Naive thymus-derived CD4-positive, alpha-beta T cell (primary cell): ENCODE measurements at regions of chr17 and their contacts with region 1.

Region 1: GRCh38 chr17:48830840-48831548 is at the start of gene CALCOCO2:
- DNase-seq: peak; percentile 69 to 88 (median 77)
- ATAC-seq: peak; percentile 96
- H3K4me3 ChIP-seq: peak within 1 kb of the TSS; percentile 97
- H3K4me3 Mint-ChIP-seq: peak within 1 kb of the TSS; percentile 93 to 99 (median 97)
- H3K27ac ChIP-seq: peak within 1 kb of the TSS; percentile 92
- H3K27ac Mint-ChIP-seq: peak within 1 kb of the TSS; percentile 83 to 99 (median 99)
- H3K4me1 ChIP-seq: peaks cover 15 to 29% of the 10 kb centered on the region in 2 donors
- H3K4me1 Mint-ChIP-seq: peaks cover 32 to 63% (median 53%) of the 10 kb centered on the region in 7 donors
- H3K27me3 ChIP-seq: no peaks in the 10 kb centered on the region
- H3K27me3 Mint-ChIP-seq: peaks cover 0 to 2% (median 0%) of the 10 kb centered on the region in 5 donors
- total RNA-seq, gene CALCOCO2: 129 to 208 (median 139) TPM

Region 2: GRCh38 chr17:48441231-48441711 is 389.7 kb before region 1 on chr17:
- CTCF ChIA-PET with region 1: no interaction called
- POLR2A ChIA-PET with region 1: no interaction called
- intact Hi-C with region 1: loop called in 1 of 2 experiments (anchors 10 kb)
- DNase-seq: peak in 7 of 9 donors; percentile 74 to 88 (median 86)
- ATAC-seq: peak; percentile 80
- H3K4me3 ChIP-seq: peak overlapping the region; percentile 28
- H3K4me3 Mint-ChIP-seq: peak overlapping the region; percentile 61 to 86 (median 76)
- H3K27ac ChIP-seq: peak overlapping the region; percentile 63
- H3K27ac Mint-ChIP-seq: peak overlapping the region; percentile 69 to 96 (median 95)
- H3K4me1 ChIP-seq: peaks cover 93 to 95% of the 10 kb centered on the region in 2 donors
- H3K4me1 Mint-ChIP-seq: peaks cover 80 to 97% (median 94%) of the 10 kb centered on the region in 7 donors
- H3K27me3 ChIP-seq: no peaks in the 10 kb centered on the region
- H3K27me3 Mint-ChIP-seq: no peaks in the 10 kb centered on the region

Region 3: GRCh38 chr17:48841395-48841831 is 10.4 kb after region 1 on chr17:
- CTCF ChIA-PET with region 1: no interaction called
- POLR2A ChIA-PET with region 1: interaction called, 10 read pairs
- intact Hi-C with region 1: loop called (anchors 1 kb)
- DNase-seq: peak in 7 of 9 donors; percentile 48 to 75 (median 62)
- ATAC-seq: peak; percentile 94
- H3K4me3 ChIP-seq: peak overlapping the region; percentile 35
- H3K4me3 Mint-ChIP-seq: peak overlapping the region; percentile 79 to 98 (median 87)
- H3K27ac ChIP-seq: peak overlapping the region; percentile 73
- H3K27ac Mint-ChIP-seq: peak overlapping the region; percentile 84 to 98 (median 95)
- H3K4me1 ChIP-seq: peaks cover 38 to 47% of the 10 kb centered on the region in 2 donors
- H3K4me1 Mint-ChIP-seq: peaks cover 33 to 67% (median 61%) of the 10 kb centered on the region in 7 donors
- H3K27me3 ChIP-seq: no peaks in the 10 kb centered on the region
- H3K27me3 Mint-ChIP-seq: no peaks in the 10 kb centered on the region

Region 4: DNA sequence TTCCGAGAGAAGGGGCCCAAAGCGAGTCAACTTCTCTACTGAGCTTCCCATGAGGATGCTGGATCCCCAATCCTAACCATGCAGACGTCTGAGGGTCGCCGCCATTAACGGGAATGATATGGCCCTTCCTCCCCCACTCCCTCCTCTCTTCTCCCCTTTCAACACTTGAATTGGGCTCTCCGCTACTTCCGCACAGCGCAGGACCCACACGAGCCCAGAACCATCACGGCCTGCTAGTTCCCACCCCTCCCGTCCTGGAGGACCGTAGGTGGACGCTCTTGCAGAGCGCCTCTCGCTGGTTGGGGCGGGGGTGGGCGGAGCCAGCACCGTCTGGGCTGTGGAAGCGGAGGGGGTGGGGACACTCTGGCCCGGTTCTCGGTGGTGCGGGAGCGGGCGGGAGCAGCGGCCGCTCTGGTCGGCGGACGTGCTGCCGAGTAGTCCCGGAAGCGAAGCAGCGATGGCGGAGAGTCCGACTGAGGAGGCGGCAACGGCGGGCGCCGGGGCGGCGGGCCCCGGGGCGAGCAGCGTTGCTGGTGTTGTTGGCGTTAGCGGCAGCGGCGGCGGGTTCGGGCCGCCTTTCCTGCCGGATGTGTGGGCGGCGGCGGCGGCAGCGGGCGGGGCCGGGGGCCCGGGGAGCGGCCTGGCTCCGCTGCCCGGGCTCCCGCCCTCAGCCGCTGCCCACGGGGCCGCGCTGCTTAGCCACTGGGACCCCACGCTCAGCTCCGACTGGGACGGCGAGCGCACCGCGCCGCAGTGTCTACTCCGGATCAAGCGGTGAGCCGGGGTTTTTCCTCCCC is 77.3 kb after region 1 on chr17 and contains the start of gene UBE2Z:
- CTCF ChIA-PET with region 1: no interaction called
- POLR2A ChIA-PET with region 1: no interaction called
- intact Hi-C with region 1: loop called in 1 of 2 experiments (anchors 2 kb)
- DNase-seq: peak; percentile 71 to 86 (median 84)
- ATAC-seq: peak; percentile 96
- H3K4me3 ChIP-seq: peak within 1 kb of the TSS; percentile 62
- H3K4me3 Mint-ChIP-seq: peak within 1 kb of the TSS; percentile 90 to 100 (median 96)
- H3K27ac ChIP-seq: peak within 1 kb of the TSS; percentile 93
- H3K27ac Mint-ChIP-seq: peak within 1 kb of the TSS; percentile 95 to 99 (median 98)
- H3K4me1 ChIP-seq: peaks cover 22 to 33% of the 10 kb centered on the region in 2 donors
- H3K4me1 Mint-ChIP-seq: peaks cover 32 to 52% (median 50%) of the 10 kb centered on the region in 7 donors
- H3K27me3 ChIP-seq: no peaks in the 10 kb centered on the region
- H3K27me3 Mint-ChIP-seq: no peaks in the 10 kb centered on the region
- total RNA-seq, gene UBE2Z: 71.6 to 96.6 (median 91.8) TPM